HCT116 (cell line): ENCODE measurements at regions of chr20 and their contacts with region 1.

Region 1: DNA sequence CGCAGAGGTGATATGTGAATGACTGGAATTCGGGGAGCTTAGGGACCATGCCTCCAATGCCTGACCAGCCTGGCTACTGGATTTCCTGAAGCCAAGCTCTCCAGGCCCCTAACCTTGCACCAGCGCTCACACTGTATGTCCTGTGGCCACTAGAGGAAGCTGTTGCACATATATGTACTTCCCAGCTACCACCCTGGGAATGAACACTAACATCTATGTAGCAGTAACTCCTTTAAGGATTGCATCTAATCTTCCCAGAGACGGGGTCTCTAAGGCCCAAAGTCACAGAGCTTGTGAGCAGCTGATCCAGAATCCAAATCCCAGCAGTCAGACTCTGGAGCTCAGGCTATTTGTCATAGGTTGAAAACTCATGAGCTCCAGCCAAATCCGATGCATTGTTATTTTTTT is 20.4 kb upstream of the BPIFB1 start:
- DNase-seq: peak; percentile 62
- ATAC-seq: peak; percentile 99
- H3K4me3 ChIP-seq: no peak overlapping the region
- H3K27ac ChIP-seq: no peak overlapping the region
- H3K4me1 ChIP-seq: no peaks in the 10 kb centered on the region
- H3K27me3 ChIP-seq: 0 out of 2 replicates have a peak, but pooled peaks cover 4% of the 10 kb centered on the region
- CTCF ChIP-seq: peak; percentile 72 to 83 (median 82)
- POLR2A ChIP-seq: no peak
- RAD21 ChIP-seq: peak; percentile 72

Region 2: DNA sequence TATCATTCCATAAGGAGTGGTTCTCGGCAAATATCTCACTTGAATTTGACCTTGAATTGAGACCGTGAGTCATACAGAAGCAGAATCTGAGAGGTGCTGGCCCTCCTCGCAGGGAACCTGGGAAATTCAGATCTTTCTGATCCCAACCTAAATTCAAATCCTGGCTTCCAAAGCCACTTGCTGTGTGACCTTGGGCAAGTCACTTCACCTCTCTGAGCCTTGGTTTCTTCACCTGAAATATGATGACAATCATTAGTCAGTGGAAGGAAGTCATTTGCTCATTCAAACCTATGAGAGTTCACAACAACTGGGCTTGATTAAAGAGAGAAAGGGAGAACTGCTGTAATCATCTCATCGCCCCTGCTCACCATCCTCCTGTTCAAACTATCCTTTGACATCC is 38.3 kb before region 1 on chr20:
- CTCF ChIA-PET with region 1: no interaction called
- POLR2A ChIA-PET with region 1: no interaction called
- RAD21 ChIA-PET with region 1: no interaction called
- intact Hi-C with region 1: no loop called
- DNase-seq: no peak
- ATAC-seq: no peak
- H3K4me3 ChIP-seq: no peak overlapping the region
- H3K27ac ChIP-seq: no peak overlapping the region
- H3K4me1 ChIP-seq: no peaks in the 10 kb centered on the region
- H3K27me3 ChIP-seq: peaks cover 62% of the 10 kb centered on the region
- CTCF ChIP-seq: no peak
- POLR2A ChIP-seq: no peak
- RAD21 ChIP-seq: no peak

Region 3: GRCh38 chr20:33291830-33292355 is 29.2 kb after region 1 on chr20:
- CTCF ChIA-PET with region 1: interaction called, 32 read pairs
- POLR2A ChIA-PET with region 1: no interaction called
- RAD21 ChIA-PET with region 1: interaction called in 1 of 2 experiments, 6 read pairs
- intact Hi-C with region 1: no loop called
- DNase-seq: peak; percentile 19
- ATAC-seq: peak; percentile 88
- H3K4me3 ChIP-seq: no peak overlapping the region
- H3K27ac ChIP-seq: no peak overlapping the region
- H3K4me1 ChIP-seq: no peaks in the 10 kb centered on the region
- H3K27me3 ChIP-seq: peaks cover 17% of the 10 kb centered on the region; the same call in 1 of the 2 replicates
- CTCF ChIP-seq: peak; percentile 79 to 100 (median 100); a peak in 5 of 6 replicates
- POLR2A ChIP-seq: no peak
- RAD21 ChIP-seq: peak; percentile 74

Region 4: DNA sequence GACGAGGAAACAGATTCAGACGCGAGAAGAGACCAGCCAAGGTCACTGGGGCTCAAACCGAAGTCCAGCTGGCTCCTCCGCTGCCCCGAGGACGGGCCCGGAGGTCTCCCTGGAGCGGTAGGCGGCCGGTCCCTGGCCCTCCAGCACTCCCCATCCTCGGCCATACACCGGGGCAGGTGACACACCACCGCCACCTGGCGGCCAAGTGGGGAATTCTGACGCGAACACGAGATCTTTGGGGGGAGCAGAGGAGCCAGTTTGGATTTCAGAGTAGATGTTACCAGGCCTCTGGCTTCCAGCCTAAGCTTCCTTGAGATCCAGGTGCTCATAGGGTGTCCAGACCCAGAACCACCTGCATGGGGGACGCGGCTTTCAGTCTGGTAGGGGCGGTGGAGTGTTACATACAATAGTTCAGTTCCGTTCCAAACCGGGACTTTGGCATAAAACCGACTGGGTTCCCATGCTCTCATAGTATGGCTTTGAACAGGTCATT is 36.5 kb after region 1 on chr20:
- CTCF ChIA-PET with region 1: interaction called, 8 read pairs
- POLR2A ChIA-PET with region 1: no interaction called
- RAD21 ChIA-PET with region 1: interaction called, 3 to 4 read pairs
- intact Hi-C with region 1: loop called (anchors 2 kb)
- DNase-seq: peak; percentile 40
- ATAC-seq: peak; percentile 97
- H3K4me3 ChIP-seq: no peak overlapping the region
- H3K27ac ChIP-seq: no peak overlapping the region
- H3K4me1 ChIP-seq: peaks cover 0 to 2% of the 10 kb centered on the region in 2 experiments; a peak in 1 of 4 replicates
- H3K27me3 ChIP-seq: 0 out of 2 replicates have a peak, but pooled peaks cover 3% of the 10 kb centered on the region
- CTCF ChIP-seq: peak; percentile 79 to 94 (median 89)
- POLR2A ChIP-seq: no peak
- RAD21 ChIP-seq: peak; percentile 79

Region 5: DNA sequence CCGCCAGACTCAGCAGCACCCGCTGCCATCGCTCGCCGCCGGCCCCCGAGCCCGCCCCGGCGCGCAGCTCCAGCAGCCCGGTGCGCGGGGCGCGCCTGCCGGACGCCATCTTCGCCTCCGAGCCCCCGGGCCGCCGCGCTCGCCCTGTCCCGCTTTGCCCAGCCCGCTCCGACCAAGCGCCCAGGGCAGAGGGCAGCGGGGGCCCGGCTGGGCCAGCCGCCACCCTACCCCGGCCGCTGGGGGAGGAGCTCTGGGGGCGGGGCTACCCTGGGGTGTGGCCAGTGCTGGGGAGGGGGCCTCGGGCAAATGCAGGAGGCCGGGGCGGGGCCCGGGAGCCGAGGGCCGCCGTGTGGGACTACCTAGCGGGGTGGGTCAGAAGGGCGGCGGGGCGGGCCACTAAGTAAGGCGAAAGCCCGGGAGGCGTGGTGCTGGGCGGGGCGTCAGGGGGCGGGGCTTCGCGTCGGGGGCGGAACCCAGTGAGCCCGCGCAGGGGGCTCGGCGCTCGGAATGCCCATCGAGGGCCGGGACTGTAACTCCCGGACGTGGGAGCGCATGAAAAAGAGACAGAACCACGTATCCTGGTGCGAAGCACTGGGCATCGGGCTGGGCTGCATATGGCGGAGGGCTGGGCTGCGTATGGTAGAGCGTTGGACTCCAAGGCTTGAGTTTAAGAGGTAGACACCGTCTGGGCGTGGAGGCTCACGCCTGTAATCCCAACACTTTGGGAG is 181.0 kb after region 1 on chr20 and contains the start of gene SNTA1:
- CTCF ChIA-PET with region 1: interaction called, 10 read pairs
- POLR2A ChIA-PET with region 1: no interaction called
- RAD21 ChIA-PET with region 1: no interaction called
- intact Hi-C with region 1: no loop called
- DNase-seq: no peak
- ATAC-seq: peak; percentile 91
- H3K4me3 ChIP-seq: peak within 1 kb of the TSS; percentile 57 to 69
- H3K27ac ChIP-seq: peak within 1 kb of the TSS; percentile 63; the same call in 1 of the 2 replicates
- H3K4me1 ChIP-seq: peaks cover 12 to 22% of the 10 kb centered on the region in 2 experiments
- H3K27me3 ChIP-seq: no peaks in the 10 kb centered on the region
- CTCF ChIP-seq: no peak
- POLR2A ChIP-seq: no peak
- RAD21 ChIP-seq: no peak
- total RNA-seq, gene SNTA1: 14.6 TPM